Breast epithelium (tissue), 4 donors: ENCODE measurements at regions of chr18 and their contacts with region 1.

Region 1: GRCh38 chr18:42164556-42164955 is 209.5 kb downstream of the PIK3C3 start:
- DNase-seq: no peak
- H3K4me3 ChIP-seq: no peak overlapping the region
- H3K27ac ChIP-seq: no peak overlapping the region
- H3K4me1 ChIP-seq: no peaks in the 10 kb centered on the region
- H3K27me3 ChIP-seq: no peaks in the 10 kb centered on the region
- CTCF ChIP-seq: no peak
- POLR2A ChIP-seq: no peak

Region 2: DNA sequence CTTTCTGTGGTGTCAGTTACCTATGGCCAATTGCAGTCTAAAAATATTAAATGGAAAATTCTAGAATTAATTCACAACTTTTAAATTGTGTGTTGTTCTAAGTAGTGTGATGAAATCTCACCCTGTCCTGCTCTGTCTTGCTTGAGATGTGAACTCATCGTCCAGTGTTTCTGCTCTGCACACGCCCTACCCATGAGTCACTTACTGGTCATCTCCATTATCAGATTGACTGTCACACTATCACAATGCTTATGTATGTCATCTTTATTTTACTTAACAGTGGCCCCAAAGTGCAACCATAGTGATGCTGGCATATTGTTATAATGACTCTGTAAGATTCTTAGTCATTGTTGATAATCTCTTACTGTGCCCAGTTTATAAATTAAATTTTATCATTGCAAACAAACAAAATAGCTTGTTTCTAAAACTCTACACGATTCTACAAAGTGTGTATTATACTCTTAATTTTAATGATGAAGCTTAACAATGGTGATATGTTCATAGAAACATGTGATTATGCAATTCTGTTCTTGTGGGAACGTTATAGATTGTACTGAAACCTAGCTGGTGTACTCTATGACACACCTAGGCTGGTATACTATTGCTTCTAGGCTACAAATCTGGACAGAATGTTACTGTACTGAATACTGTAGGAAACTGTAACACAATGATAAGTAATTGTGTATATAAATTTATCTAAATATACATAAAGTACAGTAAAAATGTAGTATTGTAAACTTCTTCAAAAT is 1296.3 kb before region 1 on chr18:
- intact Hi-C with region 1: no loop called
- DNase-seq: no peak
- H3K4me3 ChIP-seq: no peak overlapping the region
- H3K27ac ChIP-seq: no peak overlapping the region
- H3K4me1 ChIP-seq: no peaks in the 10 kb centered on the region
- H3K27me3 ChIP-seq: no peaks in the 10 kb centered on the region
- CTCF ChIP-seq: no peak
- POLR2A ChIP-seq: no peak

Region 3: GRCh38 chr18:40949114-40949950 is 1215.2 kb before region 1 on chr18:
- intact Hi-C with region 1: no loop called
- DNase-seq: no peak
- H3K4me3 ChIP-seq: no peak overlapping the region
- H3K27ac ChIP-seq: no peak overlapping the region
- H3K4me1 ChIP-seq: no peaks in the 10 kb centered on the region
- H3K27me3 ChIP-seq: no peaks in the 10 kb centered on the region
- CTCF ChIP-seq: no peak
- POLR2A ChIP-seq: no peak

Region 4: DNA sequence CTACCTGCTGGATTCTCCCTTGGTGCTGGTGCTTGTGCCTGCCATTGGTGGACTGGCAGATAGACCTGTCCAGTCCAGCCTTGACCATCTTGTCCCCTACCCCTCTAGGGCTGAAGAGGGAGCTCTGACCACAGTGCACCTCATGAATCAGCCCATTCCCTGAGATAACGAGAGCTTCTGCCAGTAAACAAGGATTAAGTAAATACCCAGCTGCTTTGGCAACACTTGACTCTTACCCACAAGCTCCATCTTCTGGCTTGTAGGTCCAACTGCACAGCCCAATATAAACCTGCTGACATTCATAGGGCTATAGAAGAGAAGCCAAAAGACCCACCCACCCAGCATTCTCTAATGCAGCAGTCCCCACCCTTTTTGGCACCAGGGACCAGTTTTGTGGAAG is 23.1 kb before region 1 on chr18:
- intact Hi-C with region 1: loop called (anchors 1 kb)
- DNase-seq: no peak
- H3K4me3 ChIP-seq: no peak overlapping the region
- H3K27ac ChIP-seq: no peak overlapping the region
- H3K4me1 ChIP-seq: no peaks in the 10 kb centered on the region
- H3K27me3 ChIP-seq: no peaks in the 10 kb centered on the region
- CTCF ChIP-seq: no peak
- POLR2A ChIP-seq: no peak

Region 5: GRCh38 chr18:42211201-42211600 is 46.6 kb after region 1 on chr18:
- intact Hi-C with region 1: no loop called
- DNase-seq: no peak
- H3K4me3 ChIP-seq: no peak overlapping the region
- H3K27ac ChIP-seq: no peak overlapping the region
- H3K4me1 ChIP-seq: no peaks in the 10 kb centered on the region
- H3K27me3 ChIP-seq: no peaks in the 10 kb centered on the region
- CTCF ChIP-seq: no peak
- POLR2A ChIP-seq: no peak

Region 6: GRCh38 chr18:42730272-42730671 is 565.7 kb after region 1 on chr18:
- intact Hi-C with region 1: loop called (anchors 5 kb)
- DNase-seq: no peak
- H3K4me3 ChIP-seq: no peak overlapping the region
- H3K27ac ChIP-seq: no peak overlapping the region
- H3K4me1 ChIP-seq: no peaks in the 10 kb centered on the region
- H3K27me3 ChIP-seq: no peaks in the 10 kb centered on the region
- CTCF ChIP-seq: no peak
- POLR2A ChIP-seq: no peak